Ascending aorta (tissue), 2 donors: ENCODE measurements at regions of chr12 and their contacts with region 1.

Region 1: GRCh38 chr12:49288412-49288853 is 6.5 kb upstream of the PRPH start:
- DNase-seq: peak in 1 of 2 donors; percentile 70
- H3K4me3 ChIP-seq: no peak overlapping the region
- H3K27ac ChIP-seq: no peak overlapping the region
- H3K4me1 ChIP-seq: peaks cover 4 to 7% of the 10 kb centered on the region in 2 donors
- H3K27me3 ChIP-seq: no peaks in the 10 kb centered on the region
- CTCF ChIP-seq: peak; percentile 84 to 87 (median 87)

Region 2: DNA sequence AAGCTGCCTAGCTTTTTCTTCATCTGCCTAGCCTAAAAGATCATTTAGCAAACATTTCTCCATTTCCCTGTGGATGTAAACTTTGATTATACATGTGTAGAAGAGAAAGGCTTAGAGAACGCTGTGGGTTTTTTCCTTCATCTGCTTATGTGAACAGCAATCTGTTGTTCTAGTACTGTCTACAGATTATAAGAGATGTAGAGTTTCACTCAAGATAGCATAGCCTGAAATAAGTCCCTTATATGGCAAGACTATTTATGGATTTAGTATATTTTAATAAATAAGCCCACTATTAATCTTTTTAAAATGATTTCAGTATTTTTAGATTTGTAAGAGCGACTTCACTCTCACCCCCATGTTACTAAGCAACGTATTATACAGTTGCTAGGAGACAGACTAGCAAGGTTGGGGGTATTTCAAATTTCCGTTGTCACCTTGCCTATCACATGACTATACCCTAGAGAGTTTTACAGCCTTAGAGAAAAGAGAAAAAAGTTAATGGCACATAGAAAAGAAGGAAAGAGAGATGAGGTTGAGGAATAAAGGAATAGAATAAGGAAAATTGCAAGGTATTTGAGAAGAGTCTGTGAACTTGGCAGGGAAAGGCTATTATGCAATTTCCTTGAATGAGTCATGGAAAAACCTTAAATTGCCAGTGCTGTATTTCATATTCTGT is 87.4 kb before region 1 on chr12:
- intact Hi-C with region 1: no loop called
- DNase-seq: no peak
- H3K4me3 ChIP-seq: peak overlapping the region; percentile 29 to 34
- H3K27ac ChIP-seq: peak overlapping the region; percentile 53 to 86
- H3K4me1 ChIP-seq: peaks cover 6 to 7% of the 10 kb centered on the region in 2 donors
- H3K27me3 ChIP-seq: no peaks in the 10 kb centered on the region
- CTCF ChIP-seq: no peak

Region 3: GRCh38 chr12:49232940-49233841 is 55.2 kb before region 1 on chr12:
- intact Hi-C with region 1: no loop called
- DNase-seq: peak in 1 of 2 donors; percentile 76
- H3K4me3 ChIP-seq: peak overlapping the region; percentile 0 to 41
- H3K27ac ChIP-seq: peak overlapping the region; percentile 79 to 80
- H3K4me1 ChIP-seq: peaks cover 3 to 26% of the 10 kb centered on the region in 2 donors
- H3K27me3 ChIP-seq: no peaks in the 10 kb centered on the region
- CTCF ChIP-seq: peak in 1 of 3 experiments; percentile 18

Region 4: DNA sequence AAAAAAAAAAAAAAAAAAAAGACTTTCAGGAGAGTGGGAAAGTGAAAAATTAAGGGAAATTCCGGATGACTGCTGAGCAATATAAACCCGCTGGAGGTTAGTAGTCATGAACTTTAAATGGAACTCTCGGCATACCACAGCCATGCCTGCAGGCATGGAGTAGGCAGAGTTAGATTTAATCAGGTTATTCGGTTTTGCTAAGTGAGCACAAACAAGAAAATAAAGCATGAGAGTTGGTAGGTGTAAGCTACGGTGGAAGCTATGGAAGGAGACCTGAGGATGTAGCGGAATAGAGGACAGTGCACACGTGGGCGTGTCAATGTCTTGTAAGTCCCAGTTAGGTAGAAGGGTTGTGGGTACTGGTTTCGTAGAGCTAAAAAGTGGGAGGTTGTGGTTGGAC is 35.3 kb before region 1 on chr12:
- intact Hi-C with region 1: no loop called
- DNase-seq: no peak
- H3K4me3 ChIP-seq: no peak overlapping the region
- H3K27ac ChIP-seq: no peak overlapping the region
- H3K4me1 ChIP-seq: no peaks in the 10 kb centered on the region
- H3K27me3 ChIP-seq: no peaks in the 10 kb centered on the region
- CTCF ChIP-seq: no peak

Region 5: DNA sequence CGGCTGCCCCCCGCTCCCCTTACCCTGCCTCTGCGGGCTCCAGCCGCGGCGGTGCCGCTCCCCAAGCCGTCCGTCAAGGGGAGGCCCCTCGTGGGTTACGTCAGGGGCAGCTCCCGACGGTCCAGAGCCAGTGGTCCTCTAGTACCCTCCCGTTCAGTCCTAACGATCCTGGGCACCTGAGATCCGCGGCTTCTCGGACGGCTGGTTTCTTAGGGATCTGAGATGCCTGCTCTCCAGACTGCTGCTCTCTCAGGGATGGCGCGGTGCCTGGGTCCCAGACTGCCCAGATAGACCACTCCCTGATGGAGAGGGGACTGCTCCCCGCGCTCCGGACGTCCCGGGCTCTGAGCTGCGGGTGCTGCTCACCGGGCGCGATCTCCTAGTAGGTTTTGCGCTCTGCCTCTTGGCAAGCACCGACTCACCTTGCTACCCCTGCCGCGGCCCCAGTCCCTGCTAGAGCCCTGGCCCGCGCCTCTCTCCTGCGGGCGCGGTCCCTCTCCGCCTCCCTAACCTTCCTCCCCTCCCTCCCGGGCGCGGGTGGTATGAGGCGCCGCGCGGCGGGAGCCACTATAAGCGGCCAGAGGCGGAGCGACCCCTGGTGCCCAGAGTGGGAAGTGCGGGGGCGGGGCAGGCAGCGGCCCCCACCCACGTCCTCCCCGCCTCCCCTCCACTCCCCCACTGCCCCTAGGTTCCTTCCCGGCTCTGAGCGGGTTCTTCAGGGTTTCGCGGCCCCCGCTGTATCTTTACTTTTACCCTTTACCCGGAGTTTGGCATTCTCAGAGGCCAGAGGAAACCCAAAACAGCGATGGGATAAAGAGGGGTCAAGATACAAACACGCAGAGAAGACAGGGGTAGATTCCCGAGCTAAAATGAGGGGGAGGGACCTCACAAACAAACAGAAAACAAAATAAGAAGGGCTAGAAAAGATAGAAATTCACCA is 48.5 kb after region 1 on chr12 and contains the start of gene C1QL4:
- intact Hi-C with region 1: loop called (anchors 2 kb)
- DNase-seq: peak in 1 of 2 donors; percentile 90
- H3K4me3 ChIP-seq: peak within 1 kb of the TSS; percentile 38 to 55
- H3K27ac ChIP-seq: no peak within 1 kb of the TSS
- H3K4me1 ChIP-seq: peaks cover under 1 to 2% of the 10 kb centered on the region in 2 donors
- H3K27me3 ChIP-seq: peaks cover 13% of the 10 kb centered on the region
- CTCF ChIP-seq: peak; percentile 72 to 99 (median 98)
- total RNA-seq, gene C1QL4: not detected

Region 6: GRCh38 chr12:49503674-49504180 is 215.3 kb after region 1 on chr12:
- intact Hi-C with region 1: no loop called
- DNase-seq: no peak
- H3K4me3 ChIP-seq: no peak overlapping the region
- H3K27ac ChIP-seq: no peak overlapping the region
- H3K4me1 ChIP-seq: no peaks in the 10 kb centered on the region
- H3K27me3 ChIP-seq: no peaks in the 10 kb centered on the region
- CTCF ChIP-seq: no peak